ENCODE measurements at regions of chr12 and their contacts with region 1.

Region 1: GRCh38 chr12:120495723-120496412 is at the start of gene DYNLL1:
- DNase-seq: peak; percentile 98
- H3K4me3 ChIP-seq: peak within 1 kb of the TSS; percentile 76 to 99 (median 86)
- H3K27ac ChIP-seq: peak within 1 kb of the TSS; percentile 86 to 96 (median 92)
- H3K4me1 ChIP-seq: peaks cover 0 to 30% (median 24%) of the 10 kb centered on the region in 4 donors
- H3K27me3 ChIP-seq: no peaks in the 10 kb centered on the region
- CTCF ChIP-seq: peak in 1 of 4 experiments; percentile 7
- EP300 ChIP-seq: peak in 1 of 4 donors; percentile 32
- POLR2A ChIP-seq: peak; percentile 84 to 86
- total RNA-seq, gene DYNLL1: 204 to 254 (median 235) TPM

Region 2: GRCh38 chr12:120469450-120470149 is 26.3 kb before region 1 on chr12 and contains the start of gene SRSF9:
- intact Hi-C with region 1: loop called (anchors 2 kb)
- DNase-seq: peak; percentile 98
- H3K4me3 ChIP-seq: peak within 1 kb of the TSS; percentile 85 to 94 (median 92)
- H3K27ac ChIP-seq: peak within 1 kb of the TSS; percentile 93 to 96 (median 94)
- H3K4me1 ChIP-seq: peaks cover 0 to 40% (median 23%) of the 10 kb centered on the region in 4 donors
- H3K27me3 ChIP-seq: no peaks in the 10 kb centered on the region
- CTCF ChIP-seq: peak; percentile 71 to 87 (median 81)
- EP300 ChIP-seq: no peak
- POLR2A ChIP-seq: peak in 1 of 2 donors; percentile 43
- total RNA-seq, gene SRSF9: 41.4 to 55.1 (median 45.2) TPM

Region 3: GRCh38 chr12:120528861-120529525 is 33.1 kb after region 1 on chr12 and contains the start of gene COQ5:
- intact Hi-C with region 1: loop called (anchors 2 kb)
- DNase-seq: peak; percentile 95
- H3K4me3 ChIP-seq: peak within 1 kb of the TSS; percentile 66 to 83 (median 70)
- H3K27ac ChIP-seq: peak within 1 kb of the TSS; percentile 86 to 96 (median 91)
- H3K4me1 ChIP-seq: peaks cover 0 to 19% (median 11%) of the 10 kb centered on the region in 4 donors
- H3K27me3 ChIP-seq: no peaks in the 10 kb centered on the region
- CTCF ChIP-seq: no peak
- EP300 ChIP-seq: peak in 1 of 4 donors; percentile 16
- POLR2A ChIP-seq: no peak
- total RNA-seq, gene COQ5: 17.4 to 29.4 (median 26.4) TPM

Region 4: GRCh38 chr12:121089031-121089812 is 593.4 kb after region 1 on chr12:
- intact Hi-C with region 1: no loop called
- DNase-seq: no peak
- H3K4me3 ChIP-seq: no peak overlapping the region
- H3K27ac ChIP-seq: no peak overlapping the region
- H3K4me1 ChIP-seq: no peaks in the 10 kb centered on the region
- H3K27me3 ChIP-seq: peaks cover 0 to 6% (median 0%) of the 10 kb centered on the region in 3 donors
- CTCF ChIP-seq: no peak
- EP300 ChIP-seq: no peak
- POLR2A ChIP-seq: no peak

Measured in sigmoid colon (tissue), 7 donors.